ENCODE measurements at regions of chr5 and their contacts with region 1.

Region 1: GRCh38 chr5:88140856-88141752 is 127.5 kb downstream of the TMEM161B start:
- DNase-seq: peak; percentile 95
- H3K4me3 ChIP-seq: peak overlapping the region; percentile 35 to 36
- H3K27ac ChIP-seq: peak overlapping the region; percentile 48 to 66
- H3K4me1 ChIP-seq: no peaks in the 10 kb centered on the region
- H3K27me3 ChIP-seq: no peaks in the 10 kb centered on the region
- CTCF ChIP-seq: peak; percentile 61 to 82 (median 66)
- POLR2A ChIP-seq: no peak

Region 2: GRCh38 chr5:87954121-87954520 is 187.0 kb before region 1 on chr5:
- intact Hi-C with region 1: no loop called
- DNase-seq: no peak
- H3K4me3 ChIP-seq: no peak overlapping the region
- H3K27ac ChIP-seq: no peak overlapping the region
- H3K4me1 ChIP-seq: no peaks in the 10 kb centered on the region
- H3K27me3 ChIP-seq: no peaks in the 10 kb centered on the region
- CTCF ChIP-seq: no peak
- POLR2A ChIP-seq: no peak

Region 3: GRCh38 chr5:88675708-88676636 is 534.9 kb after region 1 on chr5:
- intact Hi-C with region 1: loop called (anchors 5 kb)
- DNase-seq: no peak
- H3K4me3 ChIP-seq: no peak overlapping the region
- H3K27ac ChIP-seq: no peak overlapping the region
- H3K4me1 ChIP-seq: no peaks in the 10 kb centered on the region
- H3K27me3 ChIP-seq: peaks cover 56% of the 10 kb centered on the region
- CTCF ChIP-seq: no peak
- POLR2A ChIP-seq: no peak

Region 4: DNA sequence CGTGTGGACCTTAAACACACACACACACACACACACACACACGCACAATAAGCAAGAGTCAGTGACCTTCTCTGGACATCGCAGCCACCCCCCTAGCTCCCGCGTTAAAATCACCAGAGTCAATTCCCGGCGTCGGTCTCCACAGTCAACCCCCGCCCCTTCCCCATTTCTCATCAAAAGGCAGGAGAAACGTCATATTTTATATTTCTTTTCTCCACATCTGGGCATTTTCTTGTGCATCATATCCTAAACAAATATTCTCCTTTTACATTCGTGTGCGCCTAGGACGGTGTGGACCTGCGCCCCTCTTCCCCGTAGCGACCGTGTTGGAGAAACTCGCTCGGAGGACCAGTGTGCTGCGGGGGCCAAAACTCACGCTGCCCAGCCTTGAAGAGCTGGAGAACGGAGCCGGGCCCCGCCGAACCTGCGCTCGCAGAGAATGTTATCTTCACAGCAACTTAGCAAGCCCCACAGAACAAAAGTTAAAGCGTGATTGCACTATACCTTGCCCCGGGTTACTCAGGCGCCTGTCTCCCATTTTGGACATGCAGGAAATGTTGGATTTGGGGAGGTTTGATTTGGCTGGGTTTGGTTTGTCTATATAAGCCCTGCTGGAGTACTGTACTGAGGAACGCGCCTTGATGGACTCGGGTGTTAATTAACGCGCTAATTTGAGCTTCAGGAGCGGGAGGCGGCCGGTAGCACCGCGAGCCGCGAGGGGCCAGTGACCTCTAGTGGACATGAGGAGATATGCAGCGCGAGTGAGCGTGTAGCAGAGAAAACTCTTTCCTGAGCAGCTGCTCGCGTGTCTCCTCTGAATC is 549.5 kb after region 1 on chr5:
- intact Hi-C with region 1: loop called (anchors 5 kb)
- DNase-seq: peak; percentile 47
- H3K4me3 ChIP-seq: no peak overlapping the region
- H3K27ac ChIP-seq: no peak overlapping the region
- H3K4me1 ChIP-seq: no peaks in the 10 kb centered on the region
- H3K27me3 ChIP-seq: peaks cover 49% of the 10 kb centered on the region
- CTCF ChIP-seq: peak; percentile 72 to 77 (median 73)
- POLR2A ChIP-seq: no peak